ENCODE measurements at regions of chr20 and their contacts with region 1.

Region 1: DNA sequence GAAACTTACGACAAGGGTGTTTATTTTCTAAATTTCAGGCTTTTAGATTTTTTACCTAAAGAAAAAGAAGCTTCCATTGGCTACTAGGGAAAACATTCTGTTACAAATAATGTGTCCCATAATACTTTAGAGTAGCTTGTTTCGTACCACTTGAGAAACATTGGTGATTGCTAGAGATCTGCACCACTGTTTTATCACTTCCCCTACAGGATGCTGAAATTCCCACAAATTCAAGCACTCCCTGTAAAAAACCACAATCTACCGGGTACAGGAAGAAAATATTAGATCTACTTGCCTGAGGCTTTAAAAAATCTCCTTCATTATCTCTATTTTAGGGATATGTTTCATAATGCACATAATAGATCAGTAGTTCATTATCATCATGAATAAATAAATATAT is 29.9 kb downstream of the SEL1L2 start:
- DNase-seq: no peak
- ATAC-seq: no peak
- H3K4me3 ChIP-seq: no peak overlapping the region
- H3K27ac ChIP-seq: no peak overlapping the region
- H3K4me1 ChIP-seq: no peaks in the 10 kb centered on the region
- H3K27me3 ChIP-seq: no peaks in the 10 kb centered on the region
- CTCF ChIP-seq: no peak

Region 2: GRCh38 chr20:13809373-13809772 is 151.2 kb before region 1 on chr20:
- intact Hi-C with region 1: no loop called
- DNase-seq: no peak
- ATAC-seq: no peak
- H3K4me3 ChIP-seq: no peak overlapping the region
- H3K27ac ChIP-seq: no peak overlapping the region
- H3K4me1 ChIP-seq: no peaks in the 10 kb centered on the region
- H3K27me3 ChIP-seq: no peaks in the 10 kb centered on the region
- CTCF ChIP-seq: no peak

Region 3: DNA sequence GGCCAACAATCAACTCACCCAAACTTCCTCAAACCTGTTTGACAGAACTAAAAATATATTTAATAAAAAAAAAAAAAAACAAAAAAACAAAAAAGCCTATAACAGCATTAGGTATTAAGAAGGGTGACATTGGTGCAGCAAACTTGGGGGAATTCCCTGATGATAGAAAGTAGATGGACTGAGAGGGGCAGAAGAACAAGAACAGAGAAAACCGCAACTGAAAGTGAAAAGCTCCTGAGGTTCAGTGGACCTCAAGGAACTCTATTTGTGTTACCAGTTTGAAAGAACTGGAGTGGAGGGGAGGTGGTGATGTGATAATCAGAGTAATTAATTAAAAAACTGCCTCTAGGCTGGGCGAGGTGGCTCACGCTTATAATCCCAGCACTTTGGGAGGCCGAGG is 88.6 kb after region 1 on chr20:
- intact Hi-C with region 1: loop called in 1 of 2 experiments (anchors 10 kb)
- DNase-seq: no peak
- ATAC-seq: no peak
- H3K4me3 ChIP-seq: no peak overlapping the region
- H3K27ac ChIP-seq: no peak overlapping the region
- H3K4me1 ChIP-seq: no peaks in the 10 kb centered on the region
- H3K27me3 ChIP-seq: no peaks in the 10 kb centered on the region
- CTCF ChIP-seq: no peak

Measured in psoas muscle (tissue), 8 donors.